ENCODE measurements at regions of chr10 and their contacts with region 1.

Region 1: DNA sequence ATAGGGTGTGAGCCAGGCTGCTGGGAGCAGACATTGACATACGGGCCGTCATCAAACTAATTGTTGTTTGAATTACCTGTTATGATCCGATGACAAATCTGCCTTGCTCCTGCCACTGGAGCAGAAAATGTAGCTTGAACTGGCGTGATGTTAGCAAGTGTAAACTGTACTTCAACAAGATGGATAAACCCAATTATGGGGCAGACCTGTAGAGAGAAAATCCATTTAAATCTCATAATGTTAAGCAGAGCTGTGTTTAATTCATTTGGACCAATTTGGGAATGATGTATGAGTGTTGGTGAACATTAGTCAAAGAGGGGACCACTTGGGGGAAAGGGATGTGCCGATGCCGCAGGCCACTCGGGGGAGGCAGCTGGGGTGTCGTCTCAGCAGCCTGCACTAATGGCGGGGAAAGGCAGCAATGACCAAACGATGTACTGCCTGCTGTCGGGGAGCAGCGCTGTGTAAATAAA is 27.4 kb downstream of the TCF7L2 start:
- DNase-seq: no peak
- H3K4me3 ChIP-seq: no peak overlapping the region
- H3K27ac ChIP-seq: no peak overlapping the region
- H3K4me1 ChIP-seq: peaks cover 0 to 11% (median 0%) of the 10 kb centered on the region in 3 donors
- H3K27me3 ChIP-seq: no peaks in the 10 kb centered on the region
- CTCF ChIP-seq: no peak
- POLR2A ChIP-seq: no peak

Region 2: DNA sequence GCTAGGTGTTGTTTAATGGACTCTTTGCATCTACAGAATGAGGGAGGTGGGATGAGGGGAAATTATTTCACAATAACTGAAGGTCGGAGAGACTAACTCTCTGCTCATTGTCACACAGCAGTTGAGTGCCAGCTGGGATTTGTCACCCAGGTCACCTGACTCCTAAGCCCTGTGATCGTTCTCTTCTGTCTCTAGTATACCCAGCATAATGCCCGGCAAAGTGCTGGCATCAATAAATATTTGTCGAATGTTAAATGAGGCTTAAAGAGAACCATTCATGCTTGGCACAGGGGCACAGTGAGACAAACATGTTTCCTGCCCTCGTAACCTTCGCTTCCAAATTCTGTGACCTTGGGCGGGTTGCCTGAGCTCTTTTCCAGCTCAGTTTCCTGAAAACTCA is 43.4 kb after region 1 on chr10:
- intact Hi-C with region 1: no loop called
- DNase-seq: no peak
- H3K4me3 ChIP-seq: no peak overlapping the region
- H3K27ac ChIP-seq: peak overlapping the region in 2 of 4 donors; percentile 53 to 66
- H3K4me1 ChIP-seq: peaks cover 0 to 72% (median 35%) of the 10 kb centered on the region in 3 donors
- H3K27me3 ChIP-seq: no peaks in the 10 kb centered on the region
- CTCF ChIP-seq: no peak
- POLR2A ChIP-seq: no peak

Region 3: GRCh38 chr10:113108212-113108835 is 130.9 kb after region 1 on chr10:
- intact Hi-C with region 1: loop called (anchors 10 kb)
- DNase-seq: no peak
- H3K4me3 ChIP-seq: no peak overlapping the region
- H3K27ac ChIP-seq: no peak overlapping the region
- H3K4me1 ChIP-seq: peaks cover 10 to 57% (median 28%) of the 10 kb centered on the region in 3 donors
- H3K27me3 ChIP-seq: no peaks in the 10 kb centered on the region
- CTCF ChIP-seq: peak in 5 of 6 experiments; percentile 7 to 52 (median 34)
- POLR2A ChIP-seq: no peak